ENCODE measurements at regions of chr4 and their contacts with region 1.

Region 1: GRCh38 chr4:184168406-184169019 is 49.2 kb downstream of the ENPP6 start:
- DNase-seq: peak; percentile 66 to 80 (median 78)
- ATAC-seq: peak; percentile 95
- H3K4me3 ChIP-seq: no peak overlapping the region
- H3K4me1 ChIP-seq: no peaks in the 10 kb centered on the region
- CTCF ChIP-seq: peak; percentile 95

Region 2: DNA sequence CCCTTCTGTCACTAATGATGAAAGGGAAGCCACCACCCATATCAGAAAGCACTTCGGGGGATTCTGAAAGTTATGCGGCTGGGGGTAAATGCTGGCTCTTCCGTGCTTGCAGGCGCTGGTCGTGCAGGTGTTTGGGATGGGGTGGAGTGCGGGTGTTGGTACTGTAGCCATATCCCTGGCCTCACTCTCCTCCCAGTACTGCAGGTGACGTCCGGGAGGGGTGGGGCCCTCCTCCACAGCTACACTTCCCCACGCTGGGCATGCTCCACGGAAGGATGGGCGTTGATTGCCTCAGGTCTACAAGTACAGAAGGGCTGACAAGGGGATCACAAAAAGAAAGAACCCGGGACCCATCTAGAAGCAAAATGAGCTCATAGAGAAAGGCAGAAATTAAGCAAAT is 797.7 kb before region 1 on chr4:
- intact Hi-C with region 1: no loop called
- DNase-seq: no peak
- ATAC-seq: peak; percentile 23
- H3K4me3 ChIP-seq: no peak overlapping the region
- H3K4me1 ChIP-seq: no peaks in the 10 kb centered on the region
- CTCF ChIP-seq: no peak

Region 3: DNA sequence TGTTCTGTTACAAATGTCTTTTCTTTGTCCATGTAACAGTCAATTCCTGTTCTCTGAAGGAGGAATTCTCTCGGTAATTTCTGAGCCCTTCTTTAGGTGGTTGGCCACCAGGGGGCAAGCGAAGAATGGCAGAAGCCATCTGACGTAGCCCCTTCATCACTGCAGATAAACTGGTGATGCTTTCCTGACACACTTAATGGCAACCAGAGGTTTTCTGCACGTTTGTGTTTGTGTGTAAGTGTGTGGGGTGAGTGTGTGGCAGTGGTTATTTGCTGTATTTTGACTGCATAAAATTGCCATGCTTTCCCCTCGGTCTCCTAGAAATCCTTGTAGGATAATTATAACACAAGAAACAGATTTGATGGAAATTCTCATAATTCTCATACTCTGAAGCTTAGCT is 328.2 kb before region 1 on chr4:
- intact Hi-C with region 1: loop called (anchors 2 to 5 kb)
- DNase-seq: peak in 2 of 3 donors; percentile 78 to 91
- ATAC-seq: peak; percentile 76
- H3K4me3 ChIP-seq: no peak overlapping the region
- H3K4me1 ChIP-seq: no peaks in the 10 kb centered on the region
- CTCF ChIP-seq: peak; percentile 39

Region 4: DNA sequence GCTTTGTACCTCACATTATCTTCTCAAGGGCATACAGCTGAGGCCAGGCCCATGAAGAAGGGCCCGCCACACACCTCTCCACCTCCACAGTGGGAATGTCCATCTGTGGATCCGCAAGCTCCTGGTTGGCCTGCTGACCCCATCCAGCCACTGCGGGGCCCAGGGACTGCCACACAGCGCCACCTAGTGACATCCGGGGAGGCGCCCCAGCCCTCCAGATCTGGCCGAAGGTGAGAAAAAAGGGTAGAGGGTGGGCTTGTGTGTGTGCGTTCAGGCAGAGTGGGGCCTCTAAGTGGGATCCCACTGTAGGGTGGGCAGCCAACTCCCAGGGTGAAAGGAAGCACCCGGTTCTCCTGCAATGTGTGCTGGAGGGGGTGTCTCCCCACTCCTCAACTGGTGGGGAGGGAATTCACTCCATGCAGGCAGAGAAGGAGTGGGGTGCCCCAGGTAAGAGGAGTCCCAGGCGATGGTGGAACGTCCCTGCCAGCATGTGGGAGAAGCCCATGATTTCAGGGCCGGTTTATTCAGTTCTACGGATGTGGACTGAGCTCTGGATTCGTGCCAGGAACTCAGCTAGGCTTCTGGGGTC is 68.1 kb before region 1 on chr4:
- intact Hi-C with region 1: loop called in 1 of 2 experiments (anchors 10 kb)
- DNase-seq: peak; percentile 50 to 77 (median 56)
- ATAC-seq: peak; percentile 73
- H3K4me3 ChIP-seq: no peak overlapping the region
- H3K4me1 ChIP-seq: no peaks in the 10 kb centered on the region
- CTCF ChIP-seq: peak; percentile 88